OCI-LY7 (cell line): ENCODE measurements at regions of chr3 and their contacts with region 1.

Region 1: GRCh38 chr3:182521339-182521738 is 272.0 kb upstream of the ATP11B start:
- DNase-seq: peak; percentile 41
- H3K4me3 ChIP-seq: no peak overlapping the region
- H3K27ac ChIP-seq: no peak overlapping the region
- H3K4me1 ChIP-seq: peaks cover 34% of the 10 kb centered on the region
- CTCF ChIP-seq: no peak

Region 2: DNA sequence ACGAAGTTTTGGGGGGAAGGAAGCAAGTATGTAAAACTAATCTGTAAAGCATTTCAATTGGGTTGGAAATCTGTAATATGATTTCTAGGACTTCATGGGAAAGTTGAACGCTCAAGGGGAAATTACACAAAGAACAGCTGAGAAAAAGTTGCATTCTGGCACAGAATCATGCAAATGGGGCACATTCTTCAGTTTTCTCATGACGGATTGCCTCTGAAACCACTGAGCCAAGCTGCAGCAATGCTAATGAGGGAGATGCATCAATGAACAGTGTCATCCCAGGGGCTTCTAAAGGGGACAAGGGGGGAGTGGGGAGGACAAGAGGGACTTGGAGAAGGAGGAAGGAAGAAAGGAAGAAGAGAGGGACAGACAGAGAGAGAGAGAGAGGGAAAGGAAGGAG is 19.5 kb before region 1 on chr3:
- CTCF ChIA-PET with region 1: no interaction called
- POLR2A ChIA-PET with region 1: interaction called, 15 read pairs
- intact Hi-C with region 1: no loop called
- DNase-seq: peak; percentile 33
- H3K4me3 ChIP-seq: no peak overlapping the region
- H3K27ac ChIP-seq: no peak overlapping the region
- H3K4me1 ChIP-seq: peaks cover 15% of the 10 kb centered on the region
- CTCF ChIP-seq: no peak

Region 3: DNA sequence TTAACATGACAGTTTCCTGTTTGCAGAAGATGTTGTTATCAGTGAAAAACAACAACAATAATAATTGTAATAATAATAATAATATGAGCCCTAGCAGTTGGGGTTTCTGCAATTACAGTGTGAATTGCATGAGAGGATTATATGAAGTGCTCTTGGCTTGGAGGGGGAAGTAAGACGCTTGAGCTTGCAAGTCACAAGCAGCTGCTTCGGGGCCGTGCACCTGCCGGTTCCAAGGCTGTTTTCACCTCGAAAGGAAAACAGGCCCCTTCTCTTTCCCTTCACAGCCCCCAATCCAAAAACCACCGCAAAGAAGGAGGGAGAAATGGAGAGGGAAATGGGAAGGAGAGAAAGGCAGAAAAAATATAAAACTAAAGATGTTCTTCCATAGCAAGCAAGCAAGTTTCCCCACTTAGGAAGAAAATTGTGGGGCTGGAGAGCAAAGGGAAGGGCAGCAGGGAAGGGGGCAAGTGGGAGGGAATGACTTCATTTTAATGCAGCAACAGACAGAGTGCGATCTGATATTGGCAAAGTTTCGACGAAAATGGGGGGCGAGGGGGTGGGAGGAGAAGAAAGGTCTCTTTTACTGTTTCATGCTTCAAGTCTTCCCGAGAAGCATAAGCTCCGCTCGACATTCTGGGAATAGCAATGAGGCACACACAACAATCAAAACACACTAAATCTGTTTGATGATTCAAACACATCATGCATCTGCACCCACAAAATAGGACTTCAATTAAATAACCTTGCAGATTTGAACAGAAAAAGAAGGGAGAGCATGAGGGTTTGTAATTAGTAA is 12.2 kb before region 1 on chr3:
- CTCF ChIA-PET with region 1: no interaction called
- POLR2A ChIA-PET with region 1: interaction called, 15 read pairs
- intact Hi-C with region 1: no loop called
- DNase-seq: peak; percentile 76
- H3K4me3 ChIP-seq: no peak overlapping the region
- H3K27ac ChIP-seq: no peak overlapping the region
- H3K4me1 ChIP-seq: peaks cover 33% of the 10 kb centered on the region
- CTCF ChIP-seq: no peak

Region 4: GRCh38 chr3:182533394-182533793 is 12.1 kb after region 1 on chr3:
- CTCF ChIA-PET with region 1: no interaction called
- POLR2A ChIA-PET with region 1: interaction called, 20 read pairs
- intact Hi-C with region 1: no loop called
- DNase-seq: no peak
- H3K4me3 ChIP-seq: no peak overlapping the region
- H3K27ac ChIP-seq: no peak overlapping the region
- H3K4me1 ChIP-seq: peaks cover 19% of the 10 kb centered on the region
- CTCF ChIP-seq: no peak

Region 5: DNA sequence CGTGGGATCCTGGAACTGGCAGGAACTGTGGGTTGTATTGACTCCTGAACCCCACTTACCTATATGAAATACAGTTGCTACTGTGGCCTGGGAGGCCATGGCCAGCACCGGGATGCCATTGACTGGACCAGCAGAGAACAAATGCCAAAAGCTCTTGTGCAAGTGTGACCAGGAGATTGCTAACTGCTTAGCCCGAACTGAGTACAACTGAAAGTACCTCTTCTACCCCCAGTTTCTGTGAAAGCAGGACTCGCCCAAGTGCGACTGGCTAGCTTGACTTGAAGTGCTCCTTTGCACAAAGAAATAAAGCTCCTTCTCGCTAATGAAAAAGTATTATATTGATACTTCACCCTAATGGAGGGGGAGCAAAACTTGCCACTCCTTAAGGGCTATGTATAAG is 170.7 kb after region 1 on chr3:
- CTCF ChIA-PET with region 1: no interaction called
- POLR2A ChIA-PET with region 1: no interaction called
- intact Hi-C with region 1: no loop called
- DNase-seq: no peak
- H3K4me3 ChIP-seq: no peak overlapping the region
- H3K27ac ChIP-seq: no peak overlapping the region
- H3K4me1 ChIP-seq: no peaks in the 10 kb centered on the region
- CTCF ChIP-seq: no peak